ENCODE measurements at regions of chr2 and their contacts with region 1.

Region 1: GRCh38 chr2:120312861-120313694 is 32.9 kb upstream of the INHBB start:
- DNase-seq: peak; percentile 45 to 82 (median 72)
- ATAC-seq: peak; percentile 76
- H3K4me3 ChIP-seq: peak overlapping the region; percentile 41 to 43
- H3K4me3 Mint-ChIP-seq: peak overlapping the region; percentile 73
- H3K27ac ChIP-seq: no peak overlapping the region
- H3K27ac Mint-ChIP-seq: peak overlapping the region; percentile 18
- H3K4me1 ChIP-seq: peaks cover 27% of the 10 kb centered on the region
- H3K4me1 Mint-ChIP-seq: peaks cover 28% of the 10 kb centered on the region
- H3K27me3 ChIP-seq: peaks cover 0 to 2% of the 10 kb centered on the region in 2 experiments
- H3K27me3 Mint-ChIP-seq: peaks cover 2% of the 10 kb centered on the region
- CTCF ChIP-seq: peak; percentile 61

Region 2: GRCh38 chr2:119702918-119703401 is 610.1 kb before region 1 on chr2:
- CTCF ChIA-PET with region 1: interaction called, 6 read pairs
- POLR2A ChIA-PET with region 1: no interaction called
- intact Hi-C with region 1: loop called (anchors 1 to 2 kb)
- DNase-seq: peak; percentile 27 to 80 (median 71)
- ATAC-seq: peak; percentile 87
- H3K4me3 ChIP-seq: no peak overlapping the region
- H3K4me3 Mint-ChIP-seq: no peak overlapping the region
- H3K27ac ChIP-seq: no peak overlapping the region
- H3K27ac Mint-ChIP-seq: no peak overlapping the region
- H3K4me1 ChIP-seq: peaks cover 12% of the 10 kb centered on the region
- H3K4me1 Mint-ChIP-seq: peaks cover 12% of the 10 kb centered on the region
- H3K27me3 ChIP-seq: peaks cover 0 to 2% of the 10 kb centered on the region in 2 experiments
- H3K27me3 Mint-ChIP-seq: no peaks in the 10 kb centered on the region
- CTCF ChIP-seq: peak; percentile 92

Region 3: DNA sequence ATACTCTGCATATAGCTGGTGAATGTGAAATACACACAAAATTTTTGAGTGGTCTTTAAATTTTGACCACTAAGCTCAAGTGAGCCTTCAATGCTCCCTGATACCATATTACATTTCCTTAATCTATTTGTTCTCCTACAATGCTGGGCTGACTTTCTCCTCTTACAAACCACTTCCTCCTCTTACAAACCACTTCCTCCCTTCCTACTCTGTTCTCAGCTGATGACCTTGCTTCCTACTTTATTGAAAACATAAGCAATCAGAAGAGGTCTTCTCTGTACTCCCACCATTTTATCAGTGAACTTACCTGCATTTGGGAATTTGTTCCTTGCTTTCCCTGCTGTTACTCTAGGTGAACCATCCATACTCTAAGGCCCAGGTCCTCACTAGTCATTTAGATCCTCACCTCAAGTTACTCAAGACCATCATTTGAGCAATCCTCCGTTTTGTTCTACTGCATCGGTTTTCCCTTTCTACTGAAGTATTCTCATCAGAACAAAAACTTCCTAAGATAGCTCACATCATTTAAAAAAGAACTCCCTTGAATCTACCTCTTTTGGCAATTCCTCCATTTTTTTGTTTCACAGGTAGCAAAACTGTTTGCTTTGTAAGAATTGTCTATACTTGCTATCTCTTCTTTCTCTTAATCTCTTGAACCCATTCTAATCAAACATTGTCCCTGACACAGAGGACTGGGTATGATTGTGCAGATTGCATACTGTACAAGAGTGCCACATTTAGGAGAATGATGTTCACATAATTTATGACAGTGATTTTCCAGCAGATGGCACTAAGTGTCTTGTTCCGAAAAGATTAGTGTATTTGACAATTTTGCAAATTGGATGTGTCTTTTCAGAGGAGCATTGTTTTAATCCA is 203.7 kb before region 1 on chr2:
- CTCF ChIA-PET with region 1: interaction called, 24 read pairs
- POLR2A ChIA-PET with region 1: no interaction called
- intact Hi-C with region 1: loop called (anchors 1 kb)
- DNase-seq: peak in 2 of 9 experiments; percentile 37 to 68
- ATAC-seq: peak; percentile 73
- H3K4me3 ChIP-seq: peak overlapping the region in 1 of 2 experiments; percentile 12
- H3K4me3 Mint-ChIP-seq: peak overlapping the region; percentile 72
- H3K27ac ChIP-seq: peak overlapping the region; percentile 1 to 33
- H3K27ac Mint-ChIP-seq: peak overlapping the region; percentile 81
- H3K4me1 ChIP-seq: peaks cover 21% of the 10 kb centered on the region
- H3K4me1 Mint-ChIP-seq: peaks cover 30% of the 10 kb centered on the region
- H3K27me3 ChIP-seq: no peaks in the 10 kb centered on the region
- H3K27me3 Mint-ChIP-seq: no peaks in the 10 kb centered on the region
- CTCF ChIP-seq: peak; percentile 66

Region 4: GRCh38 chr2:120223034-120223912 is 89.8 kb before region 1 on chr2 and contains the start of gene TMEM185B:
- CTCF ChIA-PET with region 1: interaction called, 3 read pairs
- POLR2A ChIA-PET with region 1: no interaction called
- intact Hi-C with region 1: loop called in 1 of 2 experiments (anchors 2 kb)
- DNase-seq: peak; percentile 81 to 91 (median 87)
- ATAC-seq: peak; percentile 95
- H3K4me3 ChIP-seq: peak within 1 kb of the TSS; percentile 80 to 87
- H3K4me3 Mint-ChIP-seq: peak within 1 kb of the TSS; percentile 87
- H3K27ac ChIP-seq: peak within 1 kb of the TSS; percentile 90 to 95
- H3K27ac Mint-ChIP-seq: peak within 1 kb of the TSS; percentile 93
- H3K4me1 ChIP-seq: peaks cover 36% of the 10 kb centered on the region
- H3K4me1 Mint-ChIP-seq: peaks cover 60% of the 10 kb centered on the region
- H3K27me3 ChIP-seq: no peaks in the 10 kb centered on the region
- H3K27me3 Mint-ChIP-seq: no peaks in the 10 kb centered on the region
- CTCF ChIP-seq: no peak
- total RNA-seq, gene TMEM185B: 21.3 to 23.5 TPM

Region 5: DNA sequence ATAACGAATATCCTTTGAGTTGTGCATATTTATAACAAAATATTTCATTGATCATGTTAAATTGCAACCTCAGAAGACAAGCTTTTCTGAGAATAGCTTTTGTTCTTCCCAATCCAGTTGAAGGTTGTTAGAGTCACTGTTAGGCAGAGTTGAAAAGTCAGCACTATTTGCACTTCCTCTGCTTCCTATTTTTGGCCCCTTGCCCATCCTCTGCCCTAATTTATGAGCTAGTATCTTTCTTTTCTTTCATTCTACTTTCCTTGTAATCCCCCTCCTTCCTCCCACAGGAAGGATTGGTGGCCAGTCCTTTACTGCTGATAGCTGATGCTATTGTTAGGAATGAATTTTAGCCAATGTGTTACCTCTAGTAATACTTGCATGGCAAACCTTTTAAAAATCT is 55.6 kb before region 1 on chr2:
- CTCF ChIA-PET with region 1: interaction called, 13 read pairs
- POLR2A ChIA-PET with region 1: no interaction called
- intact Hi-C with region 1: loop called in 1 of 2 experiments (anchors 2 kb)
- DNase-seq: no peak
- ATAC-seq: no peak
- H3K4me3 ChIP-seq: no peak overlapping the region
- H3K4me3 Mint-ChIP-seq: no peak overlapping the region
- H3K27ac ChIP-seq: no peak overlapping the region
- H3K27ac Mint-ChIP-seq: no peak overlapping the region
- H3K4me1 ChIP-seq: peaks cover 20% of the 10 kb centered on the region
- H3K4me1 Mint-ChIP-seq: peaks cover 42% of the 10 kb centered on the region
- H3K27me3 ChIP-seq: no peaks in the 10 kb centered on the region
- H3K27me3 Mint-ChIP-seq: no peaks in the 10 kb centered on the region
- CTCF ChIP-seq: no peak

Region 6: DNA sequence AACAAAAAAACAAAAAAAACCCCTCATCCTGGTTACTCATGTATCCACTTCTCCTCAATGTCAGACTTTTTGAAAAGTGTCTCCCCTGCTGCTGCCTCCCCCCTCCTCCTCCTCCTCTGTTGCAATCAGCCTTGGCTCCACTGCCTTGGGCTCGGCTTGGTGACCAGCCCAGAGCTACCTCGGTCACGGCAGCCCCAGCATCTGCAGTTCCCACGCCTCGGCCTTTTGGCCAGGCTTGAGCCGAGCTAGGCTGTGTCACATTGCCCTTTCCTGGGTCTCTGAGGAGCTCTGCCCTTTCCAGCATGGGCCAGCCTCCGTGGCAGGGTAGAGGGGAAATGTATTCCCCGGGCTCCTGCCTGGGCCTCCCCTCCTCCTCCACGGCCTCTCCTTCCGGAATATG is 10.1 kb after region 1 on chr2:
- CTCF ChIA-PET with region 1: interaction called, 15 read pairs
- POLR2A ChIA-PET with region 1: no interaction called
- intact Hi-C with region 1: no loop called
- DNase-seq: no peak
- ATAC-seq: no peak
- H3K4me3 ChIP-seq: no peak overlapping the region
- H3K4me3 Mint-ChIP-seq: no peak overlapping the region
- H3K27ac ChIP-seq: no peak overlapping the region
- H3K27ac Mint-ChIP-seq: no peak overlapping the region
- H3K4me1 ChIP-seq: peaks cover 6% of the 10 kb centered on the region
- H3K4me1 Mint-ChIP-seq: peaks cover 10% of the 10 kb centered on the region
- H3K27me3 ChIP-seq: no peaks in the 10 kb centered on the region
- H3K27me3 Mint-ChIP-seq: peaks cover 2% of the 10 kb centered on the region
- CTCF ChIP-seq: no peak